CD14-positive monocyte (primary cell): ENCODE measurements at regions of chr2 and their contacts with region 1.

Region 1: GRCh38 chr2:219177552-219178376 is at the start of gene RETREG2:
- DNase-seq: peak; percentile 92 to 95 (median 94)
- H3K4me3 ChIP-seq: peak within 1 kb of the TSS; percentile 76 to 95 (median 92)
- H3K4me3 Mint-ChIP-seq: peak within 1 kb of the TSS; percentile 86 to 95
- H3K27ac ChIP-seq: peak within 1 kb of the TSS; percentile 99
- H3K27ac Mint-ChIP-seq: peak within 1 kb of the TSS; percentile 98 to 100 (median 99)
- H3K4me1 ChIP-seq: peaks cover 48 to 77% of the 10 kb centered on the region in 2 donors
- H3K4me1 Mint-ChIP-seq: peaks cover 68% of the 10 kb centered on the region
- H3K27me3 ChIP-seq: no peaks in the 10 kb centered on the region
- H3K27me3 Mint-ChIP-seq: peaks cover 0 to 3% (median 2%) of the 10 kb centered on the region in 3 donors
- CTCF ChIP-seq: no peak
- polyA plus RNA-seq, gene RETREG2: 37.7 to 60.9 (median 39.4) TPM

Region 2: DNA sequence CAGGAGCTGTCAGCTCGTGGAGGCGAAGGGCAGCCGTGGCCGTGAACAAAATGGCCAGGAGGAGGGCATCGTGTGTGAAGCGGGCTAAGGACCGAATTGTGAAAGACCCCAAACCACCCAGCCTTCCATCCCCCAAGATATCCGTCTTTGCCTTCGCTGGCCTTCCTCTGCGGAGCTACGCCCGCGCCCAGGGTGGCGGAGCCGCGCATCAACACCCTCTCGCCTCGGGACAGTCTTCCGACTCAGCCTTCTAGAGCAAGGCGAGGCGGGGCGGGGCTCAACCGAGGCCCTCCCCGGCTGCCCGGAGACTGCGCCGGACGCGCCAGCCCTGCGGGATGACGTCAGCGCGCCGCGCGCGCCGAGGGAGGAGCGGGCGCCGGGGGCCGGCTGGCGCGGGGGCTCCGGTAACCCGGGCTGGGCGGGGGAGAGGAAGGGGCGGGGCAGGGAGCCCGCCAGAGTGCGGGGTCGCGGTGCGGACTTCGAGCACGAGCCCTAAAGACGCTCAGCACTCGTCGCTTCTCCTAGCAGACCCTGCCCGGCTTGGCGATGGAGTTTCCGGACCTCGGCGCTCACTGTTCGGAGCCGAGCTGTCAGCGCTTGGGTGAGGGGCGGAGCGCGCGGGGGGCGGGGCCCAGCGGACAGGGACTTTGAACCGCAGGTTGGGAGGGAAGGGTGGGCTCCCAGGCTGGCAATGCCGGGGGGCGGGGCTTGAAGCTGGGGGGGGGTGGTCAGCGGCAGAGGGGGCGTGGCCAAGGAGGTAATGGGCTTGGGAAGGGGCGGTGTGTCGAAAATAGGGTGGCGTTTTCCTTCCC is 28.9 kb after region 1 on chr2 and contains the start of gene ZFAND2B:
- intact Hi-C with region 1: loop called in 1 of 2 experiments (anchors 2 kb)
- DNase-seq: peak; percentile 87 to 91 (median 88)
- H3K4me3 ChIP-seq: peak within 1 kb of the TSS; percentile 78 to 85 (median 83)
- H3K4me3 Mint-ChIP-seq: peak within 1 kb of the TSS; percentile 86 to 98
- H3K27ac ChIP-seq: peak within 1 kb of the TSS; percentile 79 to 91
- H3K27ac Mint-ChIP-seq: peak within 1 kb of the TSS; percentile 87 to 96 (median 92)
- H3K4me1 ChIP-seq: peaks cover 19 to 21% of the 10 kb centered on the region in 2 donors
- H3K4me1 Mint-ChIP-seq: peaks cover 39% of the 10 kb centered on the region
- H3K27me3 ChIP-seq: no peaks in the 10 kb centered on the region
- H3K27me3 Mint-ChIP-seq: peaks cover 2 to 3% (median 2%) of the 10 kb centered on the region in 3 donors
- CTCF ChIP-seq: no peak
- polyA plus RNA-seq, gene ZFAND2B: 45.7 to 98.9 (median 53.2) TPM

Region 3: DNA sequence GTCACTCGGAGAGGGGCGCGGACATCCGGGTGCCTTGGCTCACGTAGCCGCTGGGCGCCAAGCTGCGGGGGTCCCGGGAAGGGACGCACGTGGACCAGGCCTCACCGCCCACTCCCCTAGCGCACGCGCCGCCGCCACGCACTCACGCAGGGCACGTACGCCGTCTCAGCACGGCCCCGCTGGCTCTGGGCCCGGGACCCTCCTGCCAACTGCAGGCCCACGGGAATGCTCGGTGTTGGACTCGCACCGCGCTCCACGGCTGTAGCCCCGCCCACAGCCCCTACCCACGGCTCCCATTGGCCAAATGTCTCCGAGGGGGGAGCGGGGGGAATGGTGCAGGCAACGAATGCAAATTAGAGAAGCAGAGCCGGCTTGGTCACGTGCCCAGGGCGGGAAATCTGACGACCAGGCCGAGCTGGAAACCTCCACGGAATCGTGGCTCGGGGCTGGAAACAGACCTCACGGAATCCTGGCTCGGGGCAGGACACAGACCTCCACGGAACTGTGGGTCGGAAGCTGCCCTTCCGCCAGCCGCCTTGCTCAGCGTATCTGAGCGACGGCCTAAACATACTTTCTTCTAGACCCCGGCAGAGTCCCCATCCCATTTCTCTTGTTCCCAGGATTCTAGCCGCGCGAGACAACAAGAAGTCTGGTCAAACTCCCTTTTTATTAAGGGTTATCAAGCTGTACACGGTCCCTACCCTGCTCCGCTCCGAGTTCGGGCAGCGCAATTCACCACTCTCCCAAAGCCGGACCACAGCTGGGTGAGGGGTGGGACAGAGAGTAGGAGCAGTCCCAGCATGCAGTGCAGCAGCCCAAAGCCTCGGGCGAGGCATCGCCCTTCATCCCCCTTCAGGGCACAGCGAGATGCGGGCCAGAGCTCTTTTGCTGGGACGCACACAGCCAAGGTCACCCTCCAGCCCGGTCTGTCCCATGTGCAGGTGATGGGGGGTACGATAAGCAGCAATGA is 41.3 kb after region 1 on chr2 and contains the start of gene ABCB6:
- intact Hi-C with region 1: loop called in 1 of 2 experiments (anchors 5 kb)
- DNase-seq: peak; percentile 76 to 84 (median 78)
- H3K4me3 ChIP-seq: peak within 1 kb of the TSS; percentile 38 to 79 (median 46)
- H3K4me3 Mint-ChIP-seq: peak within 1 kb of the TSS; percentile 70 to 86
- H3K27ac ChIP-seq: peak within 1 kb of the TSS in 1 of 2 donors; percentile 36
- H3K27ac Mint-ChIP-seq: peak within 1 kb of the TSS; percentile 37 to 87 (median 80)
- H3K4me1 ChIP-seq: peaks cover 32 to 37% of the 10 kb centered on the region in 2 donors
- H3K4me1 Mint-ChIP-seq: peaks cover 33% of the 10 kb centered on the region
- H3K27me3 ChIP-seq: peaks cover 0 to 53% of the 10 kb centered on the region in 2 donors
- H3K27me3 Mint-ChIP-seq: peaks cover 49 to 62% (median 50%) of the 10 kb centered on the region in 3 donors
- CTCF ChIP-seq: no peak
- polyA plus RNA-seq, gene ABCB6: 0.28 to 4.8 (median 0.58) TPM

Region 4: DNA sequence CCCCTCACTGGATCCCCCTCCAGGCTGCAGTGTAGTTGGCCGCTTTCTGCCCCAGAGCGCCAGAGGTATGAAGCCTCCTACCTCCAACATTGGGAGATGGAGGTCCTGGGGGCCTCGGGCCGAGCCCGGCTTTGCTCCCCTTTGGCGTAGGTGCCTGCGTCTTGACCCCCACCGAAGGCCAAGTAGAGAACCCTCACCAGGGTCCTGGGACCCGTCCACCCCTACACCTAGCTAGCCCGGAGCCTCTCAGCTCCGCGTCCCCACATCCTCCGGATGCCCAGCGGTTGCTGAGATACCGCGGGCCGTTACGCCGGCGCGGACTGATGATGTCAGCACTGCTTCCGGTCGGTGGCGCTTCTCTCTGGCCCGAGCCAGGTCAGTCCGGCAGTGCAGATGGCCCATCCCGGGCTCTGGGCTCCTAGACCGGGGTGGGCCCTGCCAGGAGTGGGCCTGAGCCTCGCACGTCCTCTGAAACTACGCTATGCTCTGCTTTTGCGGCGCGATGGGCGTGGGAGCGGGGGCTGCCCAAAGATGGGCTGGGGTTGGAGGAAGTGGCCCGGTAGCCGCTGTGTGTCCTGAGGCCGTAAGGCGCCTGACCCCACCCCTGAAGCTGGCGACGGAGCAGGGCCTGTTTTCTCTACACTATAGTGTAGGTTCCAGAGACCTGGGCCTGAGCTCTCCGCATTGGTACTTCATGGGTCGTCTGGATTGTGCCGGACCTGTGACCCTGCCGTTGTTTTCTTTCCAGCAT is 67.6 kb after region 1 on chr2 and contains the starts of genes GLB1L and STK16:
- intact Hi-C with region 1: loop called (anchors 1 to 5 kb)
- DNase-seq: peak; percentile 92 to 93 (median 93)
- H3K4me3 ChIP-seq: peak within 1 kb of the TSS; percentile 57 to 83 (median 66)
- H3K4me3 Mint-ChIP-seq: peak within 1 kb of the TSS; percentile 83 to 90
- H3K27ac ChIP-seq: peak within 1 kb of the TSS; percentile 72 to 89
- H3K27ac Mint-ChIP-seq: peak within 1 kb of the TSS; percentile 92 to 97 (median 96)
- H3K4me1 ChIP-seq: peaks cover 68 to 70% of the 10 kb centered on the region in 2 donors
- H3K4me1 Mint-ChIP-seq: peaks cover 67% of the 10 kb centered on the region
- H3K27me3 ChIP-seq: no peaks in the 10 kb centered on the region
- H3K27me3 Mint-ChIP-seq: peaks cover 0 to 3% (median 1%) of the 10 kb centered on the region in 3 donors
- CTCF ChIP-seq: no peak
- polyA plus RNA-seq, gene GLB1L: 4.0 to 11.7 (median 7.7) TPM
- polyA plus RNA-seq, gene STK16: 16.7 to 40.7 (median 17.8) TPM

Region 5: GRCh38 chr2:219253753-219254590 is 76.2 kb after region 1 on chr2 and contains the start of gene TUBA4A:
- intact Hi-C with region 1: loop called in 1 of 2 experiments (anchors 5 kb)
- DNase-seq: peak; percentile 81 to 87 (median 83)
- H3K4me3 ChIP-seq: peak within 1 kb of the TSS; percentile 88 to 96 (median 88)
- H3K4me3 Mint-ChIP-seq: peak within 1 kb of the TSS; percentile 90 to 96
- H3K27ac ChIP-seq: peak within 1 kb of the TSS; percentile 80 to 90
- H3K27ac Mint-ChIP-seq: peak within 1 kb of the TSS; percentile 92 to 98 (median 95)
- H3K4me1 ChIP-seq: peaks cover 47 to 59% of the 10 kb centered on the region in 2 donors
- H3K4me1 Mint-ChIP-seq: peaks cover 47% of the 10 kb centered on the region
- H3K27me3 ChIP-seq: no peaks in the 10 kb centered on the region
- H3K27me3 Mint-ChIP-seq: peaks cover 0 to 3% (median 2%) of the 10 kb centered on the region in 3 donors
- CTCF ChIP-seq: no peak
- polyA plus RNA-seq, gene TUBA4A: 72.7 to 452 (median 81.9) TPM

Region 6: DNA sequence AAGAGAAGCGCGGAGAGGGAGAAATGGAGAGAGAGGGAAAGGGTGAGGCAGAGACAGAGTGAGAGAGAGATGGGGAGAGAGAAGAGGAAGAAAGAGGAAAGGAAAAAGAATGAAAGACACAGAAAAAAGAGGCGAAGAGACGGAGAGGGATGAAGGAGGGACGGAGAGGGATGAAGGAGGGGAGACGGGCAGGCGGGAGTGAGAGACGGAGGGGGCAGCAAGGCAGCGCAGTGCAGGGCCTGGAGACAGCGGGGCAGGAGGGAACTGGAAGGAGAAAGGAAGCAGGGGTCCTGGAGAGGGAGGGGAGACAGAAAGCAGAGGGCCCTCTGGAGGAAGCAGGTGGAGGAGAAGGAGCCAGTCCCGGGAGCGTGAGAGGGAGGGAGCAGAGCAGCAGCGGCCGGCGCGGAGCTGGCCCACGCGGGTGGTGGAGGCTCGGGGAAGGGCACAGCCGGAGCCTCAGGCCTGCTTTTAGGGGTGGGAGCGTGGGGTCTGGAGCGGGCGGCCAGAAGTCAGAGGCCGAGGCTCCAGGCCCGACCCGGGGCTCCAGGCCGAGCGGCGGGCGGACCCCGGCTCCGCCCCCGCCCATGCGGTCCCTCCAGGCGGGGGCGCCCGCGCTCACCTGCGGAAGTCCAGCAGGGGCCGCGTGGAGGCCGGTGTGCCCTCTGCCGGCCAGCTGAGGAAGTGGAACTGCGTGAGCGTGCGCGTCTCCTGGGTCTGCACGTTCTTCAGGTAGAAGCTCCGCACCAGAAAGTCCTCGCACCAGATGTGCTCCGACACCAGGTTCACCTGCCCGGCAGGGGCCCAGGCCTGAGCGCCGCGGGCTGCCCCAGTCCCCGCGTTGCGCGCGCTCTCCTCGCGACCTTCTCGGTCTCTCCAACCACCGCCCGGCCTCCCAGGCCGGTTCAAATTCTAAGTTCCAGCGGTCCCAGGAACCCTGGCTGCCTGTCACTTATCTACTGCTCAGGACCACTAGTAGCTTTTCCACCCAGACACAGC is 116.9 kb after region 1 on chr2:
- intact Hi-C with region 1: loop called in 1 of 2 experiments (anchors 5 kb)
- DNase-seq: peak; percentile 79 to 84 (median 80)
- H3K4me3 ChIP-seq: peak overlapping the region; percentile 43 to 76 (median 48)
- H3K4me3 Mint-ChIP-seq: peak overlapping the region; percentile 79 to 95
- H3K27ac ChIP-seq: peak overlapping the region in 1 of 2 donors; percentile 31
- H3K27ac Mint-ChIP-seq: peak overlapping the region in 6 of 7 donors; percentile 41 to 80 (median 66)
- H3K4me1 ChIP-seq: peaks cover 10 to 15% of the 10 kb centered on the region in 2 donors
- H3K4me1 Mint-ChIP-seq: peaks cover 11% of the 10 kb centered on the region
- H3K27me3 ChIP-seq: peaks cover 0 to 28% of the 10 kb centered on the region in 2 donors
- H3K27me3 Mint-ChIP-seq: peaks cover 34 to 63% (median 38%) of the 10 kb centered on the region in 3 donors
- CTCF ChIP-seq: peak; percentile 100

Region 7: DNA sequence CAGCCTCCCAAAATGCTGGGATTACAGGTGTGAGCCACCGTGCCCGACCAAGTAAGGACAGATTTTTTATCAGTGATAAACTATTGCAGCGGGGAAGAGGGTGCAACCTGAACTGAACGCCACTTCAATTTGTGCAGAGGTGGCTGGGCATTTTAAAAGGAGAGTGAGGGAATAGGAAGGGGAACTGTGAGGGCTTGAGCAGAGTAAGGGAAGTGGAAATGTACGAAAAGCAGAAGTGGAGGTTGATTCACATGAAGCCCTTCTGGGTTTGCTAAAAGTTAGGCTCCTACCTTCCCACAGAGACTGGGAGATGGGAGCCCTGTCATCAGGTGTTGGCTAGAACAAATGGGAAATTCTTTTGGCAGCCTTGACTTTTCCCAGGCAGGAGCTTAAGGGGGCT is 426.0 kb after region 1 on chr2:
- intact Hi-C with region 1: loop called in 1 of 2 experiments (anchors 10 kb)
- DNase-seq: peak; percentile 57 to 78 (median 72)
- H3K4me3 ChIP-seq: peak overlapping the region in 1 of 3 experiments; percentile 40
- H3K4me3 Mint-ChIP-seq: peak overlapping the region; percentile 20 to 71
- H3K27ac ChIP-seq: peak overlapping the region in 1 of 2 donors; percentile 73
- H3K27ac Mint-ChIP-seq: peak overlapping the region; percentile 72 to 93 (median 89)
- H3K4me1 ChIP-seq: peaks cover 18 to 21% of the 10 kb centered on the region in 2 donors
- H3K4me1 Mint-ChIP-seq: peaks cover 21% of the 10 kb centered on the region
- H3K27me3 ChIP-seq: no peaks in the 10 kb centered on the region
- H3K27me3 Mint-ChIP-seq: no peaks in the 10 kb centered on the region
- CTCF ChIP-seq: no peak